ENCODE measurements at regions of chr5 and their contacts with region 1.

Region 1: GRCh38 chr5:38776149-38776896 is 69.5 kb upstream of the OSMR start:
- DNase-seq: no peak
- H3K4me3 ChIP-seq: no peak overlapping the region
- H3K27ac ChIP-seq: no peak overlapping the region
- H3K4me1 ChIP-seq: no peaks in the 10 kb centered on the region
- H3K27me3 ChIP-seq: peaks cover 30% of the 10 kb centered on the region; the same call in 1 of the 2 replicates
- CTCF ChIP-seq: no peak

Region 2: DNA sequence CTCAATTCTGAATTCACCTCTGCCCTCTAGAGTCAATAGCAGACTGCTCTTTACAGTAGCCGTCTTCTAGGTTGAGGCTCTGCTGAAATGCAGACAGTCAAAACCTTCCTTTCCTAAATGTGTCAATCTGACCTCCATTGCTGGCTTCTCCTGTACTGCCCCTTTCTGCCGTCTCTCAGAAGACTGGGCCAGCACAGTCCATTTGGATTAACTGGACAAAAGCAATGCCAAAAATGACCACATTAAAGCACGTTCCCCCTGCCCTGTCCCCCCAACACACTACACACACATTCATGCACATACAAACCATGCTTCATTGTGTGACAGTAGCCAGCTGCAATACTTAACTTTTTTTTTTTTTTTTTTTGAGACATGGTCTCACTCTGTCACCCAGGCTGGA is 89.7 kb before region 1 on chr5:
- CTCF ChIA-PET with region 1: no interaction called
- POLR2A ChIA-PET with region 1: no interaction called
- intact Hi-C with region 1: loop called (anchors 5 kb)
- DNase-seq: no peak
- H3K4me3 ChIP-seq: no peak overlapping the region
- H3K27ac ChIP-seq: no peak overlapping the region
- H3K4me1 ChIP-seq: no peaks in the 10 kb centered on the region
- H3K27me3 ChIP-seq: peaks cover 10% of the 10 kb centered on the region; the same call in 1 of the 2 replicates
- CTCF ChIP-seq: no peak

Region 3: DNA sequence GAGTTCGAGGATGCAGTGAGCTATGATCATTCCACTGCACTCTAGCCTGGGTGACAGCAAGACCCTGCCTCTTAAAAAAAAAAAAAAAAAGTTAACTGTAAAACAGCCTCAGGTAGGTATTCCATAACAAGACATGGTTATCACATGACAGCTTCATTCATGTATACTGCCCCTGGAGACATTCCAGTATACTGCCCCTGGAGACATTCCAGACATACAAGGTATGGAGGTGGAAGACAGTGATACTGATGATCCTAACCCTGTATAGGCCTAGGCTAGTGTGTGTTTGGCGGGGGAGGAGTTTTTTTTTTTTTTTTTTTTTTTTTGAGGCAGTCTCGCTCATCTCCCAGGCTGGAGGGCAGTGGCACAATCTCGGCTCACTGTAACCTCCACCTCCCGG is 192.3 kb after region 1 on chr5:
- CTCF ChIA-PET with region 1: no interaction called
- POLR2A ChIA-PET with region 1: no interaction called
- intact Hi-C with region 1: no loop called
- DNase-seq: no peak
- H3K4me3 ChIP-seq: no peak overlapping the region
- H3K27ac ChIP-seq: no peak overlapping the region
- H3K4me1 ChIP-seq: no peaks in the 10 kb centered on the region
- H3K27me3 ChIP-seq: no peaks in the 10 kb centered on the region
- CTCF ChIP-seq: no peak